CD14-positive monocyte (primary cell): ENCODE measurements at regions of chr1 and their contacts with region 1.

Region 1: DNA sequence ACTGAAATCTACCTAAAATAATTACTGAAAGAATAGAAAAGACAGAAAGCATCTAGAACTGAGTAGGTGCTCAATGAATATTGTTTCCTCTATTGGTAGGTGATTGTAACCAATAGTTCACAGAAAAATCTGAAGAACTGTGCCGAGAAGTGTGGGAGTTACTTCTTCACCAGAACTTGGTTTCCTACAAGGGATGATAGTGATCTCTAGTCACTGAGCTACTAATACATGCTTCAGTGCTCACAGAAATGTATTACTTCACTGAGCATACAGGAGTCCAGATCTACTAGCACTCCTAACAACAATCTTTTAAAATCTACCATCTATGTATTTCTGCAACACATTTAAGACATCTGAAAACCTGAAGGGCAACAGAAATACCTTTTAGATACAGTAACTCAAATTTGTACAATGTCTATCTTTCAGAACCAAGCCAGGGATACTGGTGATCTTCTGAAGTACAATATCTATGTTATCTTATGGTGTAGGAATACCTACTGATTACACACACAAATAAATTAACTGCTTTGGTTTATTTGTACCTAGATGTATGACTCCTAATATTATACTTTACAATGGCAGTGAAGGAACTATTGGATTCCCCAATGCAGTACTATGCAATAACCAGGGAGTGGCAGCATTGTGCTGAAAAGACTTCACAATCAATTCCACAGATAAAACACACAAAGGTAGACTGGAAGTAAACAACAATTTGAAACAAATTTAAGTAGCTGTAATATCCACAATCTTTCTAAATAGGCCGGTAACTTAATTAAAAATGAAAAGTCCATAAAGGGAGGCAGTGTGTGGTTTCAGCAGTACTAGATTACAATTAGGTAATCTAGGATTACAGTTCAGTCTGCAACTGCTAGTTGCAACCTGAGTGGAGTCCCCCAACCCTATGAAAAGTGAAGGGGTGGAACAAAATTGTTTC is 243.0 kb downstream of the SLC45A1 start:
- DNase-seq: peak; percentile 25 to 60 (median 45)
- H3K4me3 ChIP-seq: no peak overlapping the region
- H3K4me3 Mint-ChIP-seq: no peak overlapping the region
- H3K27ac ChIP-seq: no peak overlapping the region
- H3K27ac Mint-ChIP-seq: no peak overlapping the region
- H3K4me1 ChIP-seq: peaks cover 3 to 10% of the 10 kb centered on the region in 2 donors
- H3K4me1 Mint-ChIP-seq: peaks cover 4% of the 10 kb centered on the region
- H3K27me3 ChIP-seq: no peaks in the 10 kb centered on the region
- H3K27me3 Mint-ChIP-seq: no peaks in the 10 kb centered on the region
- CTCF ChIP-seq: peak; percentile 97

Region 2: DNA sequence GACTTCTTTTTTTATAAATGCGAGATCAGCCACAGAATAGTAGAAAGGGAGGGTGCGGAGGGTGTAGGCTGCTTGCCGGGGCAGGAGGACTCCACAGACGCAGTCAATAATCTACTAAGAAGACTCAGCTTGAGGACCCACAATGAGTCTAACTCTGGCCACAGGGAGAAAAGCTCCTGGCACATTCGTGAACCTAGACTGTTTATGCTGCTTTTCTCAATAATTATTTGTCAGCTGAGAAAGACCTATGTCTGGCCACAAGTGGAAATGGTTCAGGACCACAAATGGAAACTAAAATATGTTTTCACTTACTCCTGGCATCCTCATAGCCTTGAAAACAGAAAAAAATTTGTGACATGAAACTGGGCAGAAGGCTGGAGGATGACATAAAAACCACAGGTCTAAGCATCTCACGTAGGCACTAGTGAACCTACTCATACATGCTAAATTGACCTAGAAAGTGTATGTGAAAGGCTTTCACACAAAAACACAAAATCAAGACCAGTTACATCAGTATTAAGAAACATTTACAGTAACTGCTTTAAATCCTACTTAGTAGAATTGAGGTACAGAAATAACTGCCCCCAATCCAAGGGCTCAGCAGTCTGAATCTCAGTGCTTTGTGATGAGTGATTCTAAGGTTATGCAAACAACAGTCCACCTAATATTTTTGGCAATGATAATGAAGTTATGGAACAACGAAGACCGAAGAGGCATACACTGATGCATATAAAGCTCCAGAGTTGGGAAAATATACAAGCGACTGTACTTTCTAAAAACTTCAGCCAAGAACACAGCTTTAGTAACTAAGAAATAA is 83.5 kb before region 1 on chr1:
- intact Hi-C with region 1: no loop called
- DNase-seq: no peak
- H3K4me3 ChIP-seq: no peak overlapping the region
- H3K4me3 Mint-ChIP-seq: no peak overlapping the region
- H3K27ac ChIP-seq: no peak overlapping the region
- H3K27ac Mint-ChIP-seq: peak overlapping the region in 2 of 7 donors; percentile 21 to 55
- H3K4me1 ChIP-seq: peaks cover 14 to 21% of the 10 kb centered on the region in 2 donors
- H3K4me1 Mint-ChIP-seq: peaks cover 27% of the 10 kb centered on the region
- H3K27me3 ChIP-seq: no peaks in the 10 kb centered on the region
- H3K27me3 Mint-ChIP-seq: no peaks in the 10 kb centered on the region
- CTCF ChIP-seq: no peak

Region 3: GRCh38 chr1:8506995-8507615 is 53.8 kb before region 1 on chr1:
- intact Hi-C with region 1: no loop called
- DNase-seq: no peak
- H3K4me3 ChIP-seq: no peak overlapping the region
- H3K4me3 Mint-ChIP-seq: no peak overlapping the region
- H3K27ac ChIP-seq: peak overlapping the region in 1 of 2 donors; percentile 28
- H3K27ac Mint-ChIP-seq: peak overlapping the region in 5 of 7 donors; percentile 4 to 86 (median 30)
- H3K4me1 ChIP-seq: peaks cover 15 to 19% of the 10 kb centered on the region in 2 donors
- H3K4me1 Mint-ChIP-seq: peaks cover 22% of the 10 kb centered on the region
- H3K27me3 ChIP-seq: no peaks in the 10 kb centered on the region
- H3K27me3 Mint-ChIP-seq: peaks cover 0 to 2% (median 0%) of the 10 kb centered on the region in 3 donors
- CTCF ChIP-seq: no peak

Region 4: GRCh38 chr1:8671306-8671917 is 110.5 kb after region 1 on chr1:
- intact Hi-C with region 1: loop called (anchors 1 to 5 kb)
- DNase-seq: peak; percentile 56 to 64 (median 61)
- H3K4me3 ChIP-seq: no peak overlapping the region
- H3K4me3 Mint-ChIP-seq: no peak overlapping the region
- H3K27ac ChIP-seq: no peak overlapping the region
- H3K27ac Mint-ChIP-seq: no peak overlapping the region
- H3K4me1 ChIP-seq: peaks cover 4 to 24% of the 10 kb centered on the region in 2 donors
- H3K4me1 Mint-ChIP-seq: peaks cover 30% of the 10 kb centered on the region
- H3K27me3 ChIP-seq: no peaks in the 10 kb centered on the region
- H3K27me3 Mint-ChIP-seq: peaks cover 0 to 2% (median 0%) of the 10 kb centered on the region in 3 donors
- CTCF ChIP-seq: peak; percentile 89

Region 5: GRCh38 chr1:8727809-8728213 is 166.9 kb after region 1 on chr1:
- intact Hi-C with region 1: loop called (anchors 2 kb)
- DNase-seq: no peak
- H3K4me3 ChIP-seq: no peak overlapping the region
- H3K4me3 Mint-ChIP-seq: no peak overlapping the region
- H3K27ac ChIP-seq: no peak overlapping the region
- H3K27ac Mint-ChIP-seq: no peak overlapping the region
- H3K4me1 ChIP-seq: no peaks in the 10 kb centered on the region
- H3K4me1 Mint-ChIP-seq: peaks cover 2% of the 10 kb centered on the region
- H3K27me3 ChIP-seq: no peaks in the 10 kb centered on the region
- H3K27me3 Mint-ChIP-seq: no peaks in the 10 kb centered on the region
- CTCF ChIP-seq: no peak

Region 6: GRCh38 chr1:8848663-8849386 is 287.9 kb after region 1 on chr1:
- intact Hi-C with region 1: loop called (anchors 5 to 10 kb)
- DNase-seq: peak; percentile 64 to 73 (median 71)
- H3K4me3 ChIP-seq: no peak overlapping the region
- H3K4me3 Mint-ChIP-seq: no peak overlapping the region
- H3K27ac ChIP-seq: no peak overlapping the region
- H3K27ac Mint-ChIP-seq: no peak overlapping the region
- H3K4me1 ChIP-seq: no peaks in the 10 kb centered on the region
- H3K4me1 Mint-ChIP-seq: peaks cover 3% of the 10 kb centered on the region
- H3K27me3 ChIP-seq: no peaks in the 10 kb centered on the region
- H3K27me3 Mint-ChIP-seq: peaks cover 0 to 2% (median 1%) of the 10 kb centered on the region in 3 donors
- CTCF ChIP-seq: peak; percentile 97

Region 7: GRCh38 chr1:9069326-9070100 is 508.6 kb after region 1 on chr1 and contains the start of gene SLC2A5:
- intact Hi-C with region 1: no loop called
- DNase-seq: peak; percentile 66 to 81 (median 78)
- H3K4me3 ChIP-seq: peak within 1 kb of the TSS in 1 of 3 experiments; percentile 62
- H3K4me3 Mint-ChIP-seq: peak within 1 kb of the TSS; percentile 71 to 92
- H3K27ac ChIP-seq: peak within 1 kb of the TSS; percentile 30 to 46
- H3K27ac Mint-ChIP-seq: peak within 1 kb of the TSS; percentile 42 to 91 (median 84)
- H3K4me1 ChIP-seq: peaks cover 61 to 81% of the 10 kb centered on the region in 2 donors
- H3K4me1 Mint-ChIP-seq: peaks cover 65% of the 10 kb centered on the region
- H3K27me3 ChIP-seq: no peaks in the 10 kb centered on the region
- H3K27me3 Mint-ChIP-seq: peaks cover 0 to 2% (median 0%) of the 10 kb centered on the region in 3 donors
- CTCF ChIP-seq: no peak
- polyA plus RNA-seq, gene SLC2A5: 0.75 to 1.3 (median 0.81) TPM